Dorsolateral prefrontal cortex (tissue), 120 donors: ENCODE measurements at regions of chr13 and their contacts with region 1.

Region 1: GRCh38 chr13:35720690-35721554 is 244.4 kb upstream of the MAB21L1 start:
- DNase-seq: peak in 9 of 10 donors; percentile 48 to 78 (median 59)
- H3K4me3 ChIP-seq: peak overlapping the region in 57 of 59 donors; percentile 6 to 65 (median 43)
- H3K27ac ChIP-seq: no peak overlapping the region
- H3K27me3 ChIP-seq: no peaks in the 10 kb centered on the region
- CTCF ChIP-seq: peak; percentile 65 to 99 (median 95)

Region 2: GRCh38 chr13:35210261-35210660 is 510.7 kb before region 1 on chr13:
- intact Hi-C with region 1: loop called in 1 of 2 experiments (anchors 5 kb)
- DNase-seq: no peak
- H3K4me3 ChIP-seq: no peak overlapping the region
- H3K27ac ChIP-seq: no peak overlapping the region
- H3K27me3 ChIP-seq: no peaks in the 10 kb centered on the region
- CTCF ChIP-seq: peak in 25 of 56 donors; percentile 5 to 56 (median 30)

Region 3: DNA sequence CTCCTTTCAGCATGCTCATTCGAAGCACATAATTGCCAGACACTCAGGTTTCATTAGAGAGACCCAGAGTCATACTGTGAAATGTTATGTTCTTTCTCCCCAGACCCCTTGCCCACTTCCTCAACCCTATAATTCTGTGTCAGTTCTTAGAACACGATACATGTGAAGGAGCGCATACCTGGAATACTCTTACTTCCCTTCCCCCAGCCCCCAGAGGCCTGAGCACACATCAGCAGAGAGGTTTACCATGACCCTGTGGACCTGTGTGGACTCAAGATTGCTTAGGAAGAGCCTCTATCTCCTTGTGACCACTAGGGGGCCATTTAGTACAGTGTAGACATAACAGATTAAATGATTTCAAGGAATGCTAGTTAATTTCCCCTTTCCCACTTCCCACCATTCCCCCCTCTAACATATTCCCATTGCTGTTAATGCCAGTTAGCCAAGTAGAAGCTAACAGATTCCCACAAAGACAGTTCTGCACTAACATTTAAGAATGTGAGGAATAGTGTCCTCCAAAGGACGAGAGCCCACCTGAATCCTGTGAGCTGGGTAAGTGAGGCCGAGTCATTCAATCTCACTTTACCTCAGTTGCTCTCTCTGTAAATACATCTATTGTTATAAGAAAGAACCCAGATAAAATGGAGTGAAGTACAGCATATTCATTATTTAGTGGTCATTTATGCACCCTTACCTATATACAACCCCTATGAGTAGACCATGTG is 90.2 kb before region 1 on chr13:
- intact Hi-C with region 1: loop called in 1 of 2 experiments (anchors 5 kb)
- DNase-seq: peak in 1 of 10 donors; percentile 12
- H3K4me3 ChIP-seq: no peak overlapping the region
- H3K27ac ChIP-seq: no peak overlapping the region
- H3K27me3 ChIP-seq: no peaks in the 10 kb centered on the region
- CTCF ChIP-seq: peak; percentile 24 to 75 (median 61)

Region 4: GRCh38 chr13:35649162-35649561 is 71.8 kb before region 1 on chr13:
- intact Hi-C with region 1: no loop called
- DNase-seq: no peak
- H3K4me3 ChIP-seq: no peak overlapping the region
- H3K27ac ChIP-seq: no peak overlapping the region
- H3K27me3 ChIP-seq: no peaks in the 10 kb centered on the region
- CTCF ChIP-seq: no peak

Region 5: GRCh38 chr13:35789335-35790165 is 68.6 kb after region 1 on chr13:
- intact Hi-C with region 1: loop called in 1 of 2 experiments (anchors 5 kb)
- DNase-seq: no peak
- H3K4me3 ChIP-seq: no peak overlapping the region
- H3K27ac ChIP-seq: peak overlapping the region in 1 of 59 donors; percentile 45
- H3K27me3 ChIP-seq: no peaks in the 10 kb centered on the region
- CTCF ChIP-seq: peak; percentile 30 to 77 (median 60)

Region 6: GRCh38 chr13:35976126-35976525 is 255.2 kb after region 1 on chr13:
- intact Hi-C with region 1: no loop called
- DNase-seq: no peak
- H3K4me3 ChIP-seq: no peak overlapping the region
- H3K27ac ChIP-seq: peak overlapping the region in 3 of 59 donors; percentile 4 to 31 (median 21)
- H3K27me3 ChIP-seq: peaks cover 0 to 4% (median 0%) of the 10 kb centered on the region in 45 donors
- CTCF ChIP-seq: no peak